ENCODE measurements at regions of chr5 and their contacts with region 1.

Region 1: GRCh38 chr5:78886341-78887230 is 98.5 kb downstream of the ARSB start:
- DNase-seq: no peak
- ATAC-seq: no peak

Region 2: GRCh38 chr5:78829811-78830527 is 56.6 kb before region 1 on chr5:
- intact Hi-C with region 1: loop called (anchors 10 kb)
- DNase-seq: peak; percentile 81
- ATAC-seq: peak; percentile 93